Naive thymus-derived CD8-positive, alpha-beta T cell (primary cell): ENCODE measurements at regions of chr19 and their contacts with region 1.

Region 1: DNA sequence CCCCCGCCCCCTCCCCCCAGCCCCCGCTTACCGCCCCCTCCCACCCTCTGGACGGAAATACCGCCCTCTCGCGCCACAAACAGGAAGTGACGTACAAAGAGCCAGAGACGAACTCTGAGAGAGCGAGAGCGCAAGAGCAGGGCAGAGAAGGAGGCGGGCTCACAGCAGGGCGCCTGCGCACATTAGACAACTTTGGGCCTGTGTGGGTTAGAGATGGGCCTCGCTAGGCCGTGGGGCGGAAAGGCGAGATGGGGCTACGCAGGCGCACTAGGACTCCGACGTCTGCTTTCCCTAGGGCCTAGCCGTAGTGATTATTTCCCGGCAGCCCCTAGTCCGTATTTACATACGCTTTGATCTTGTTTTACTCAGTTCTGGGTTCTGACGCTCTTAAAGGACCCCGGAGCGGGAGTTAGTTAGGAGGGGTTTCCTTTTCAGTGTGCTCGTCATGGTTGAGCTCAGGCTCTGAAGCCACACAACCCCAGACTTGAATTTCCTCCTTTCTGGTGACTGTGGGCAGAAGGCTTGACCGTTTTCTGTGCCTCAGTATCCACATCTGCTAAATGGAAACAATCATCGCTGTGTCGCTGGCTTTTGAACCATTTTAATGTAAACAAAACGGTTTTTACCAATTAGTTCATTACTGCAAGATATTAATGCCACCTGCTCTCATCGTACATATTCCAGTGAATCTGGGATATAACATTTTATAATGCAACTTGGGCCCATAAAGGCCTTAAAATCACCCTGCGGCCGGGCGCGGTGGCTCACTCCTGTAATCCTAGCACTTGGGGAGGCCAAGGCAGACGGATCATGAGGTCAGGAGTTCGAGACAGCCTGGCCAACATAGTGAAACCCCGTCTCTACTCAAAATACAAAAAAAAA is 449 bp upstream of the AKT2 start:
- DNase-seq: peak; percentile 92 to 100 (median 98)
- ATAC-seq: peak; percentile 69 to 77
- H3K4me3 Mint-ChIP-seq: peak overlapping the region; percentile 79 to 99 (median 86)
- H3K27ac Mint-ChIP-seq: peak overlapping the region; percentile 94 to 100 (median 98)
- H3K4me1 Mint-ChIP-seq: peaks cover 18 to 54% (median 50%) of the 10 kb centered on the region in 4 donors
- H3K27me3 Mint-ChIP-seq: no peaks in the 10 kb centered on the region

Region 2: DNA sequence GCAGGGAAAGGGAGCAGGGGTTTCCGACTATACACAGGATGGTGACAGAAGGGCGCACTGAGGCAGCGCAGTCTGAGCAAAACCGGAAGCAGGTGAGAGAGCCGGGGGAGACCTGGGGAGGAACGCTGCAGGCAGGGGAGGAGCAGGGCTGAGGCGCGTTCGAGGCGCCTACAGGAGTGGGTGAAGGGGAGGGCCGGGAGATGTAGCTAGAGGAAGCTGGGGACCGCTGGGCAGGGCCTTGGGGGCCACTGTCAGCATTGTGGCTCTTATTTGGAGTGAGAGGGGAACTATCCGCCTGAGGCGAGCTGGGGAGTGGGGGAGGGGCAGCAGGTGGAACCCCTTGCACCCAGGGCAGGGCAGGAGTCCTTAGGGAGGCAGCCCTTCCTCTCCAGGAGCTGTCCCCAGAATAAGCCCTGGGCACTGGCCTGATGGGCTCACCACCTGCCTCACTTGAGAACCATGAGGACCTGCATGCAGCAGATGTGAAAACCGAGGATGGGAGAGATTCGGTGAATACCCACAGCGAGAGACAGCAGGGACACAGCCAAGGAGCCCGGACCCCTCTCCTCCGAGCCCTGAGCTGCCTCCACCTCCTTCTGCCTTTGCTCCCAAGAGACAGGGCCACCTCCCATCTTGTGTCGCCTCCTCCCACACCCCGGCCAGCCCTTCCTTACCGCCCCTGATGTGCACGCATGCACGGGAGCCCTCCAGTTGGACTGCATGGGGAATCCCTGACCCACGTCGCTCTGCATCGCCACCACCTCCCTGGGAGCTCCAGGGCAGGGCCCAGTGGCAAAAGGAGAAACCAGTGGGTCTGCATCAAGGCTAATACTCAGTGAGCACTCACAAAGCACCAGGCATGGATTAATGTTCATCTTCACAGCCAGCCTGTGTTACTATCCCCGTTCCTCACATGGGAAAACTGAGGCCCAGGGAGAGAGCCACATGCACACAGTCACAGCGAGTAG is 10.7 kb before region 1 on chr19:
- POLR2A ChIA-PET with region 1: interaction called, 22 read pairs
- DNase-seq: peak in 9 of 10 donors; percentile 11 to 69 (median 42)
- ATAC-seq: peak; percentile 87 to 91
- H3K4me3 Mint-ChIP-seq: peak overlapping the region; percentile 40 to 83 (median 74)
- H3K27ac Mint-ChIP-seq: peak overlapping the region; percentile 15 to 93 (median 87)
- H3K4me1 Mint-ChIP-seq: peaks cover 48 to 89% (median 80%) of the 10 kb centered on the region in 4 donors
- H3K27me3 Mint-ChIP-seq: no peaks in the 10 kb centered on the region

Region 3: GRCh38 chr19:40348125-40348913 is 62.7 kb after region 1 on chr19 and contains the starts of genes C19orf47 and PLD3:
- POLR2A ChIA-PET with region 1: interaction called, 11 read pairs
- DNase-seq: peak; percentile 88 to 99 (median 98)
- ATAC-seq: peak; percentile 92 to 96
- H3K4me3 Mint-ChIP-seq: peak within 1 kb of the TSS; percentile 83 to 98 (median 94)
- H3K27ac Mint-ChIP-seq: peak within 1 kb of the TSS; percentile 90 to 98 (median 94)
- H3K4me1 Mint-ChIP-seq: peaks cover 18 to 57% (median 39%) of the 10 kb centered on the region in 4 donors
- H3K27me3 Mint-ChIP-seq: no peaks in the 10 kb centered on the region
- polyA plus RNA-seq, gene C19orf47: 6.8 to 10.0 (median 9.8) TPM
- polyA plus RNA-seq, gene PLD3: 46.5 to 87.5 (median 67.5) TPM